HepG2 (cell line): ENCODE measurements at regions of chr18 and their contacts with region 1.

Region 1: DNA sequence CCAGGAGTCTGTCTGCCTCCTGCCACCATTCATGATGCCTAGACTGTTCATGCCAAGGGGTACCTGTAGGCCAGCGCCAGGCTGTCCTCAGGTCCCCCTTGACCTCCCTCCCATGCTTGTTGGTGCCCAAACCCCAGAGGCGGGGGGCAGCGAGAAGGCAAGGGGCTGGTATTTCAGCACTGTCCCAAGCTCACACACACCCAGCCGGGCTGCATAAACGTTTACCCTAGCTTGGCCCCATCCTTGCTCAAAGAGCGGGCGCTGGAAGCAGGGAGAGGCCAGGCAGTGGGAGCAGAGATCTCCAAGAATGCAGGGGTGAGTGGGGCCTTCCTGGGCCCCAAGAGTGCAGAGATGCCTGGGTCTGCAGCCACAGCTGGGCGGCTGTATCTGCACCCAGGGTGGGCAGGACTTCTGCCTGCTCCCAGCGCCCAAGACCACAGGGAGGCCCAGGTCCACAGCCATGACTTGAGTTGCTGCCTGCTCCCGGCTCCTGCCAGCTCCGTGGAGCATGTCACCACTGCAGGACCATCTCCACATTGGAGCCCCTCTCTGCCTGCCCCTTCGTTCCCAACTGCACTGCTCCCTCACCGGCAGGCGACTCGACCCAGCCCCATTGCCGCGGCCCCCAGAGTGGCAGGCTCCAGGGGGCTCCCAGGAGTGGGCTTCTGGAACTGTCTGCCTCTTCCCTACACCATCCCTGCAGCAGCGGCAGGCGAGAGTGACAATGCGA is 616.6 kb downstream of the METTL4 start:
- DNase-seq: no peak
- ATAC-seq: no peak
- H3K4me3 ChIP-seq: no peak overlapping the region
- H3K27ac ChIP-seq: no peak overlapping the region
- H3K4me1 ChIP-seq: no peaks in the 10 kb centered on the region
- H3K27me3 ChIP-seq: no peaks in the 10 kb centered on the region
- CTCF ChIP-seq: no peak
- EP300 ChIP-seq: no peak
- POLR2A ChIP-seq: no peak
- RAD21 ChIP-seq: no peak

Region 2: GRCh38 chr18:1658908-1659566 is 295.7 kb before region 1 on chr18:
- CTCF ChIA-PET with region 1: no interaction called
- POLR2A ChIA-PET with region 1: no interaction called
- in situ Hi-C with region 1: no loop called
- intact Hi-C with region 1: no loop called
- DNase-seq: no peak
- ATAC-seq: no peak
- H3K4me3 ChIP-seq: no peak overlapping the region
- H3K27ac ChIP-seq: no peak overlapping the region
- H3K4me1 ChIP-seq: no peaks in the 10 kb centered on the region
- H3K27me3 ChIP-seq: no peaks in the 10 kb centered on the region
- CTCF ChIP-seq: no peak
- EP300 ChIP-seq: no peak
- POLR2A ChIP-seq: no peak
- RAD21 ChIP-seq: no peak

Region 3: GRCh38 chr18:1848716-1849115 is 106.0 kb before region 1 on chr18:
- CTCF ChIA-PET with region 1: no interaction called
- POLR2A ChIA-PET with region 1: no interaction called
- in situ Hi-C with region 1: no loop called
- intact Hi-C with region 1: no loop called
- DNase-seq: no peak
- ATAC-seq: no peak
- H3K4me3 ChIP-seq: no peak overlapping the region
- H3K27ac ChIP-seq: no peak overlapping the region
- H3K4me1 ChIP-seq: no peaks in the 10 kb centered on the region
- H3K27me3 ChIP-seq: no peaks in the 10 kb centered on the region
- CTCF ChIP-seq: no peak
- EP300 ChIP-seq: no peak
- POLR2A ChIP-seq: no peak
- RAD21 ChIP-seq: no peak

Region 4: GRCh38 chr18:1976484-1976883 is 21.7 kb after region 1 on chr18:
- CTCF ChIA-PET with region 1: no interaction called
- POLR2A ChIA-PET with region 1: no interaction called
- in situ Hi-C with region 1: no loop called
- intact Hi-C with region 1: loop called (anchors 1 kb)
- DNase-seq: no peak
- ATAC-seq: no peak
- H3K4me3 ChIP-seq: no peak overlapping the region
- H3K27ac ChIP-seq: no peak overlapping the region
- H3K4me1 ChIP-seq: no peaks in the 10 kb centered on the region
- H3K27me3 ChIP-seq: no peaks in the 10 kb centered on the region
- CTCF ChIP-seq: no peak
- EP300 ChIP-seq: no peak
- POLR2A ChIP-seq: no peak
- RAD21 ChIP-seq: no peak

Region 5: GRCh38 chr18:2139691-2140090 is 184.9 kb after region 1 on chr18:
- CTCF ChIA-PET with region 1: no interaction called
- POLR2A ChIA-PET with region 1: no interaction called
- in situ Hi-C with region 1: no loop called
- intact Hi-C with region 1: no loop called
- DNase-seq: no peak
- ATAC-seq: no peak
- H3K4me3 ChIP-seq: no peak overlapping the region
- H3K27ac ChIP-seq: no peak overlapping the region
- H3K4me1 ChIP-seq: no peaks in the 10 kb centered on the region
- H3K27me3 ChIP-seq: no peaks in the 10 kb centered on the region
- CTCF ChIP-seq: no peak
- EP300 ChIP-seq: no peak
- POLR2A ChIP-seq: no peak
- RAD21 ChIP-seq: no peak